Activated naive CD4-positive, alpha-beta T cell treated with anti-CD3 and anti-CD28 coated beads for 36 hours (primary cell): ENCODE measurements at regions of chr3 and their contacts with region 1.

Region 1: DNA sequence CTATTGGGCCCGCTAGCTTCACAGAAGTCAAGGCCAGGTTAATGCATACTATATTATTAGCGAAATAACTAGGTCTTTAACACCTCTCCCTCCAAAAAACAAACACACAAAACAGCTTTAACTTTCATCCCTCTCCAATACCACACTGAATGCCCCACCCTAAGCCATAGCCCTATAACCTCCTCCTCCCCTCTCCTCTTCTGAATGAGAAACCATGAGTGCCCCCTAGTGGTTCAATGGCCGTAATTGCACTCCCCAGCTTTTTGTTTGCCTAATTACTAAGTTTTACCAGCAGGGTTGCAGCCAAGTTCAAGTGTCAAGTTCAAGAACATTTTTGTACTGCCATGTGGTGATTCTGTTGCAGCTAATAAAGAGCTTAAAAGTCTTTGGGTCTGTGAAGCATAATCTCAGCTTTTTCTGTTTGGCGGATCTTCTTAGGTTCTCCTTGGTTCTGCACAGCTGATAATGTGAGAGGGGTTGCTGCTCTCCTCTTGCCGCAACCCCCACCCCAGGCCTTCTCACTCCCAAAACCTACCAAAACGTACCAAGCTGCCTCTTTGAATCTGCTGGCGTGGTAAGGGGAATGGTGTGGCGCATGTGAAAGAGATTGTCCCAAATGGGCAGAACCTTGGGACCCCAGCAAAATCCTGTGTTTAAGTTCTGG is 57.9 kb downstream of the RPL22L1 start:
- DNase-seq: peak; percentile 81
- H3K4me3 Mint-ChIP-seq: no peak overlapping the region
- H3K27ac Mint-ChIP-seq: no peak overlapping the region
- H3K4me1 Mint-ChIP-seq: no peaks in the 10 kb centered on the region
- H3K27me3 Mint-ChIP-seq: no peaks in the 10 kb centered on the region

Region 2: GRCh38 chr3:170037463-170038433 is 774.3 kb before region 1 on chr3 and contains the start of gene GPR160:
- CTCF ChIA-PET with region 1: no interaction called
- intact Hi-C with region 1: loop called (anchors 5 kb)
- DNase-seq: peak; percentile 89
- H3K4me3 Mint-ChIP-seq: peak within 1 kb of the TSS; percentile 84
- H3K27ac Mint-ChIP-seq: no peak within 1 kb of the TSS
- H3K4me1 Mint-ChIP-seq: peaks cover 24% of the 10 kb centered on the region
- H3K27me3 Mint-ChIP-seq: no peaks in the 10 kb centered on the region
- total RNA-seq, gene GPR160: 10.3 TPM

Region 3: DNA sequence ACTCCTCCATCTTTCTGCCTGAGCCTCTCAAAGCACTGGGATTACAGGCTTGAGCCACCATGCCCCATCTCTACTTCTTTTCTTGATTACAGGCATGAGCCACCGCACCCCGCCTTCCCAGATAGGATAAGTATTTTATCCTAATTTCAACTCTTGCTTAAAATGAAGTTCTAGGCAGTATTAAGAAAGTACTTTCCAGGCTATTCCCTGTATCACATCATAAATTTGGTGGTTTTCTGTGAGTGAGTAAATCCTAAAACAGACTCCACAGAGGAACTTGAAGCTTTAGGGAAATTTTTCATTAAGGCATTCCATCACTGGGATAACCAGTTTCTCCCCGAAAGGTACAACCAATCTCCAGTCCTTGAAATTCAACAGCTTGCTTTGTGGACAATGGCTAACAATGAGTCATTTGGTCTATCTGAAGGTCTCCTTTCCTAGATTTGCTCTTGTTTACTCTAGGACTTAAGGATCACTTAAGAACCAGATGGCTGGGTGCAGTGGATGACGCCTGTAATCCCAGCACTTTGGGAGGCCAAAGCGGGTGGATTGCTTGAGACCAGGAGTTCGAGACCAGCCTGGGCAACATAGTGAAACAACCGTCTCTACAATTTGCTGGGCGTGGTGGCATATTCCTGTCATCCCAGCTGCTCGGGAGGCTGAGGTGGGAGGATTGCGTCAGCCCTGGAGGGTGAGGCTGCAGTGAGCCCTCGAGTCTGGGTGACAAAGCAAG is 504.2 kb before region 1 on chr3:
- CTCF ChIA-PET with region 1: interaction called, 3 read pairs
- intact Hi-C with region 1: loop called (anchors 1 kb)
- DNase-seq: no peak
- H3K4me3 Mint-ChIP-seq: no peak overlapping the region
- H3K27ac Mint-ChIP-seq: no peak overlapping the region
- H3K4me1 Mint-ChIP-seq: no peaks in the 10 kb centered on the region
- H3K27me3 Mint-ChIP-seq: no peaks in the 10 kb centered on the region

Region 4: GRCh38 chr3:170689893-170690660 is 122.0 kb before region 1 on chr3:
- CTCF ChIA-PET with region 1: interaction called, 11 read pairs
- intact Hi-C with region 1: loop called (anchors 5 kb)
- DNase-seq: peak; percentile 59
- H3K4me3 Mint-ChIP-seq: no peak overlapping the region
- H3K27ac Mint-ChIP-seq: no peak overlapping the region
- H3K4me1 Mint-ChIP-seq: peaks cover 3% of the 10 kb centered on the region
- H3K27me3 Mint-ChIP-seq: no peaks in the 10 kb centered on the region

Region 5: GRCh38 chr3:170848292-170848917 is 36.3 kb after region 1 on chr3:
- CTCF ChIA-PET with region 1: interaction called, 21 read pairs
- intact Hi-C with region 1: no loop called
- DNase-seq: no peak
- H3K4me3 Mint-ChIP-seq: no peak overlapping the region
- H3K27ac Mint-ChIP-seq: no peak overlapping the region
- H3K4me1 Mint-ChIP-seq: peaks cover 5% of the 10 kb centered on the region
- H3K27me3 Mint-ChIP-seq: peaks cover 10% of the 10 kb centered on the region